GM18951 (cell line): ENCODE measurements at regions of chr1 and their contacts with region 1.

Region 1: GRCh38 chr1:24847995-24848881 is 81.8 kb downstream of the RUNX3 start:
- POLR2A ChIP-seq: peak; percentile 51

Region 2: DNA sequence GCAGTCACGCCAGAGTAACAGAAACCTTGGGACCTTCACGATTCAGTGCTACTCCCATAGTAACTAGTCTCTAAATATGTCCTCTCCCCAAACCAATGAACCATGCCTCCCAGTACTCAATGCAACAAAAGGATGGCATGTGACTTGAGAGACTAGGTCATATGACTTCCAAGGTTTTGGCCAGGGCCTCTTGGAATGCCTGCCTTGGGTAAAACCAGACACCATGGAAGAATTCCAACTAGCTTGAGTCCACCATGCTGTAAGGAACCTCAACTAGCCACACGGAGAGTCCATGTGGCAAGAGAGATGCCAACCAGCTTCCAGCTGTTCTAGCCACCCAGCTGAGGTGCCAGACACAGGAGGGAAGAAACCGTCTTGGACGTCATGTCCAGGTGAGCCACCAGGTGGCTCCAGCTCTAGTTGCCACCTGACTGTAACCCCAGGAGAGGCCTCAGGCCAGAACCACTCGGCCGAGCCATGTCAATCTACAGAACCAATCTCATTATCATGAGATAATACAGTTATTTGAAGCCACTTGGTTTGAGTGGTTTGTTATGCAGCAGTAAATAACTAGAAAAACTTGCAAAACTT is 269.1 kb after region 1 on chr1:
- in situ Hi-C with region 1: loop called (anchors 10 kb)
- POLR2A ChIP-seq: no peak

Region 3: GRCh38 chr1:25204797-25205480 is 356.7 kb after region 1 on chr1:
- in situ Hi-C with region 1: loop called (anchors 5 kb)
- POLR2A ChIP-seq: no peak